Activated CD4-positive, alpha-beta T cell treated with anti-CD3 and anti-CD28 coated beads, Interleukin-2, amount 10 ng/mL, durations not matched to agents 24 days and 14 days (primary cell): ENCODE measurements at regions of chr21 and their contacts with region 1.

Region 1: GRCh38 chr21:36927719-36928117 is 38.8 kb downstream of the HLCS start:
- DNase-seq: peak; percentile 90
- H3K4me3 Mint-ChIP-seq: no peak overlapping the region
- H3K27ac Mint-ChIP-seq: no peak overlapping the region
- H3K4me1 Mint-ChIP-seq: peaks cover 6% of the 10 kb centered on the region
- H3K27me3 Mint-ChIP-seq: no peaks in the 10 kb centered on the region

Region 2: GRCh38 chr21:36504067-36505058 is 423.4 kb before region 1 on chr21:
- intact Hi-C with region 1: loop called (anchors 1 kb)
- DNase-seq: peak; percentile 83
- H3K4me3 Mint-ChIP-seq: no peak overlapping the region
- H3K27ac Mint-ChIP-seq: no peak overlapping the region
- H3K4me1 Mint-ChIP-seq: no peaks in the 10 kb centered on the region
- H3K27me3 Mint-ChIP-seq: peaks cover 5% of the 10 kb centered on the region

Region 3: GRCh38 chr21:36747815-36748383 is 179.8 kb before region 1 on chr21:
- intact Hi-C with region 1: loop called (anchors 10 kb)
- DNase-seq: peak; percentile 79
- H3K4me3 Mint-ChIP-seq: no peak overlapping the region
- H3K27ac Mint-ChIP-seq: no peak overlapping the region
- H3K4me1 Mint-ChIP-seq: no peaks in the 10 kb centered on the region
- H3K27me3 Mint-ChIP-seq: peaks cover 55% of the 10 kb centered on the region

Region 4: DNA sequence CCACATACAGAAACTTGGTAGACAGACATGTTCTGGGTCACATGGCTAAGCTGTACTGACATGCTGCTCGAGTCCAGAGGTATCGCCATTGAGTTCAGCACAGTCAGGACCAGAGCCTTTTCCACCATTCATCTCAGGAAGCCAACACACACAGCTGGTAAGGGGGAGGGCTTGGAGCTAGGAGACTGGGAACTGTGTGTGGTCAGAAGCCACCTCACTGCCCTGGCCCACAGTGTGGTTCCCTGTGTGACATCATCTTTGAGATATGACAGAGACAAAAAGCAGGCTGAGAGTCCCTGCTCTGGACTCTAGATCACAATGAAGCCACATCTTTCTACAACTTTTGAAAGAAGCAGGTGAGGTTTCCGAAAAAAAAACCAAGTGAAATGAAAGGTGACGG is 121.6 kb before region 1 on chr21:
- intact Hi-C with region 1: no loop called
- DNase-seq: no peak
- H3K4me3 Mint-ChIP-seq: no peak overlapping the region
- H3K27ac Mint-ChIP-seq: no peak overlapping the region
- H3K4me1 Mint-ChIP-seq: no peaks in the 10 kb centered on the region
- H3K27me3 Mint-ChIP-seq: no peaks in the 10 kb centered on the region

Region 5: GRCh38 chr21:36976882-36977651 is 49.3 kb after region 1 on chr21:
- intact Hi-C with region 1: no loop called
- DNase-seq: peak; percentile 75
- H3K4me3 Mint-ChIP-seq: no peak overlapping the region
- H3K27ac Mint-ChIP-seq: peak overlapping the region; percentile 49
- H3K4me1 Mint-ChIP-seq: peaks cover 26% of the 10 kb centered on the region
- H3K27me3 Mint-ChIP-seq: peaks cover 6% of the 10 kb centered on the region